ENCODE measurements at regions of chr9 and their contacts with region 1.

Region 1: GRCh38 chr9:4489919-4490704 is at the start of gene SLC1A1:
- DNase-seq: peak; percentile 71
- ATAC-seq: peak; percentile 92 to 93
- total RNA-seq, gene SLC1A1: 1.9 to 3.4 TPM

Region 2: DNA sequence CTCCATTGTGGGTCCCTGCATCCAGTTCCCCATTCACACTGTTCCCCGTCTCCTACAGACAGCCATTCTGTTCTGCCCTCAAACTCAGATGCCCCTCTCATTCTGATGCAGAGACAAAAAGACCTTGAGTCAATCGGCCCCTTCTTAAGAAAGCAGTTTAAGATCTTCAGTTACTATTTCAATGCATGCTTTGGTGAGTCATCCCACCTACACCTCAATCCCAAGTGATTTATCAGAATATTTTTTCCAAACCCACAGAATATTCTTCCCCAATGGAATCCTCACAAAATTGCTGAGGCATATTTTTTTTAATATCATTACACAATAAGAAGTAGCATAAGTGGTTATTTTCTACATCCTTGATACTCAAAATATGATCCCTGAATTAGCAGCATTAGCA is 92.2 kb before region 1 on chr9:
- intact Hi-C with region 1: loop called in 1 of 2 experiments (anchors 10 kb)
- DNase-seq: no peak
- ATAC-seq: no peak

Region 3: DNA sequence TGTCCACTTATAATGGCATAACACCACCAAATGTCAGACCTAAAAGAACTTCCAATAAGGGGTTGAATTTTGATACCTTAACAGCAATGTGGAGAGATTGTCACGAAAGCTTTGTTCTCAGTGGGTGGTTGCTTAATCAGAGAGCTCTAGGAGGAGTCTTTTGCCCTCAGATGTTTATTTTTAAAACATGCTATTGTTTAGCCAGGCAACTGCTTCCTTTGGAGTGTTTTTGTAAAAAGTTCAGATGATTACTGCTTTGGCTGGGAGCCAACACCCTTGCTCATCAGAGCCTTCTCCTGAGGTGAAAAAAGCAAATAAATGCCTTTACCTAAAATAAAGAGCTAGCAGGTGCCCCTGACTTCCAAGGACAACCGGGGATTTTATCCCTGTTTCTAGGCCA is 65.1 kb after region 1 on chr9:
- intact Hi-C with region 1: loop called in 1 of 2 experiments (anchors 10 kb)
- DNase-seq: peak; percentile 63
- ATAC-seq: no peak

Region 4: GRCh38 chr9:4574657-4575243 is 84.6 kb after region 1 on chr9:
- intact Hi-C with region 1: no loop called
- DNase-seq: no peak
- ATAC-seq: no peak

Region 5: GRCh38 chr9:4604678-4605095 is 114.6 kb after region 1 on chr9:
- intact Hi-C with region 1: no loop called
- DNase-seq: peak; percentile 43
- ATAC-seq: peak; percentile 67 to 80

Measured in left cardiac atrium (tissue), 4 donors.